ENCODE measurements at regions of chr5 and their contacts with region 1.

Region 1: GRCh38 chr5:16791036-16791705 is 144.9 kb downstream of the MYO10 start:
- DNase-seq: peak; percentile 95
- ATAC-seq: peak; percentile 40
- H3K4me3 ChIP-seq: no peak overlapping the region
- H3K27ac ChIP-seq: no peak overlapping the region
- H3K4me1 ChIP-seq: no peaks in the 10 kb centered on the region
- H3K27me3 ChIP-seq: no peaks in the 10 kb centered on the region
- CTCF ChIP-seq: peak; percentile 97

Region 2: DNA sequence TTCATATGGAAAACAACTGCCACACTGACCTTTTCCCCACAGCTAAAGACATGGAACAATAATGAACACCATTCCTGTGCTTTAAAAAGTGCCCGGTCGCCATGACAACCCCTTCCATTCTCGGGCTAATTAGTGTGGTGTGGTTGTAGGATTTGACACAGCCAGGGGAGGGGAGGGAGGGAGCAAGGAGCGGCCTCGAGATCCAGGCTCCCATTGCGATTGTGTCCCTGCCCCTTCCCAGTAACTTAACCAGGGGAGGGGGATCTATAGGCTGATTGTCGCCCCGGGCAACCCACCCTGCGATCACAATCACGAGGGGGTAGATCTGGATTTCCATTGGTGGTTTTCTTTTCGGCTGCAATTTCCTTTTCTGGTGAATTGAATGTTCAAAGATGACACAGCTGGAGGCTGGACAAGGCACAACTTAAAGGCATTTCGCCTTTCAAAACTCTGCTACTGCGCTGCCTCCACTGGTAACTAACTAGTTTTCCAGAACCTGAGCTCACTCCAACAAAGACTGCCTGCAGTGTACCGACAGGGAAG is 77.7 kb before region 1 on chr5:
- CTCF ChIA-PET with region 1: no interaction called
- POLR2A ChIA-PET with region 1: no interaction called
- intact Hi-C with region 1: no loop called
- DNase-seq: no peak
- ATAC-seq: no peak
- H3K4me3 ChIP-seq: no peak overlapping the region
- H3K27ac ChIP-seq: no peak overlapping the region
- H3K4me1 ChIP-seq: no peaks in the 10 kb centered on the region
- H3K27me3 ChIP-seq: no peaks in the 10 kb centered on the region
- CTCF ChIP-seq: no peak

Region 3: GRCh38 chr5:16885635-16886365 is 94.6 kb after region 1 on chr5:
- CTCF ChIA-PET with region 1: no interaction called
- POLR2A ChIA-PET with region 1: interaction called, 10 read pairs
- intact Hi-C with region 1: no loop called
- DNase-seq: no peak
- ATAC-seq: no peak
- H3K4me3 ChIP-seq: no peak overlapping the region
- H3K27ac ChIP-seq: no peak overlapping the region
- H3K4me1 ChIP-seq: peaks cover 57% of the 10 kb centered on the region
- H3K27me3 ChIP-seq: no peaks in the 10 kb centered on the region
- CTCF ChIP-seq: no peak

Region 4: DNA sequence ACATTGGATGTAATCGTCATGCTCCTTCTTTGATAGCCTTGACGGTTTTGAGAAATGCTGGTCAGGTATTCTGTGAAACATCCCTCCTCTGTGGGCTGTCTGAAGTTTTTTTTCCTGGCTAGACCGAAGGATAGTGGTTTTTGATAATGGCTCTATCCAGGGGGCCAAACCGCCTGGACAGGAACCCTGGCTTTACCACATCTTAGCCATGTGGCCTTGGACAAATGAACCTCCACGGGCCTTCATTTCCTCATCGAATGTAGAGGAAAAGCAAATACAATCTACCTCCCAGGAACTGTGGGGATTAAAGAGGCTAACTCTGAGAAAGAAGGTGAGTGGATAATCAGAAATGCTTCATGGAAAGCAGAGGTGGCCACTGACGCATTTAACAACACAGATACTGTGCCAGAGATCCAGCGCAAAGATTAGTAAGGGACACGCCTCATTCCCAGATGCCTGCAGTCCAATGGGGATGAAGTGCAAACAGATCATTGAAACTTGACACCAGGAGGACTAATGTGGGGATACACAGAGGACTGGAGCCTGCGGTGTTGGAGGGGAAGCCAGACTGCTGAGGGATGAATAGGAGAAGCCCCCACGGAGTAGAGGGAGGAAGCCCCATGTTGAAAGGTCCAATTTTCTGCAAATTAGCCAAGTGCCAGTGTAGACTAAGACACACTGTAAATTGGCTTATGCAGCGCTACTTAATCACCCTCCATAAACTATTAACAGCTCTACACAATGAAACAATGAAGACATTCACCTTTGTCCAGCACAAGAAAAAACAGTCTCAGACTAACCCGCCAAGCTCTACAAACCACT is 103.3 kb after region 1 on chr5:
- CTCF ChIA-PET with region 1: no interaction called
- POLR2A ChIA-PET with region 1: no interaction called
- intact Hi-C with region 1: loop called (anchors 1 kb)
- DNase-seq: peak; percentile 100
- ATAC-seq: peak; percentile 77
- H3K4me3 ChIP-seq: peak overlapping the region; percentile 39
- H3K27ac ChIP-seq: peak overlapping the region; percentile 91
- H3K4me1 ChIP-seq: peaks cover 67% of the 10 kb centered on the region
- H3K27me3 ChIP-seq: no peaks in the 10 kb centered on the region
- CTCF ChIP-seq: no peak

Region 5: DNA sequence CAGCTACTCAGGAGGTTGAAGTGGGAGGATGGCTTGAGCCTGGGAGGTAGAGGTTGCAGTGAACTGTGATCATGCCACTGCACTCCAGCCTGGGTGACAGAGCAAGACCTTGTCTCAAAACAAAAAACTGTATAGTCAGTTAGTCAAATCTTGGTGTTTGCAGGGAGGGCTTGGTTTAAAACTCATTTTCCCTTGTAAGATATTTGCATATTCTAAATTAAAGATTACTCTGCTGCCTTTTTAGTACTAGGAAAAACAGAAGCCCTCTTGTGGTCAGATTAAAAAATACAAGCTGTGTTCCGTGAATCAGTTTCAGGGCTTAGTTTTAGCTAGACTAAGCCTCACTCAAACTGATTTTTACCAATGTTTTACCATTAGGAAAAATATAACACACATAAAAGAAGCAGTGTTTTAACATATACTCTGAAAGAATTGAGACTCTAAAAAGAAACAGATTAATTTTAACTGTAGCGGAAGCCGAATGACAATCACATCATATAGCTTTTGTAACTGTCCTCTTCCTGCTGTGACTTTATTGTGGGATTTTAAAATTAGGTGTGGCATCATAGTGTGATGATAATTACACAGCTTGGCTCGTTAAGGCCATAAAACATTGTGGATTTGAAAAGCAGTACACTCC is 341.4 kb after region 1 on chr5:
- CTCF ChIA-PET with region 1: interaction called, 8 read pairs
- POLR2A ChIA-PET with region 1: no interaction called
- intact Hi-C with region 1: loop called (anchors 2 kb)
- DNase-seq: peak; percentile 88
- ATAC-seq: no peak
- H3K4me3 ChIP-seq: no peak overlapping the region
- H3K27ac ChIP-seq: no peak overlapping the region
- H3K4me1 ChIP-seq: peaks cover 27% of the 10 kb centered on the region
- H3K27me3 ChIP-seq: no peaks in the 10 kb centered on the region
- CTCF ChIP-seq: peak; percentile 94

Region 6: GRCh38 chr5:17189381-17190036 is 398.3 kb after region 1 on chr5:
- CTCF ChIA-PET with region 1: interaction called, 14 read pairs
- POLR2A ChIA-PET with region 1: no interaction called
- intact Hi-C with region 1: loop called (anchors 1 kb)
- DNase-seq: peak; percentile 99
- ATAC-seq: peak; percentile 45
- H3K4me3 ChIP-seq: no peak overlapping the region
- H3K27ac ChIP-seq: peak overlapping the region; percentile 1; the same call in 1 of the 2 replicates
- H3K4me1 ChIP-seq: peaks cover 53% of the 10 kb centered on the region
- H3K27me3 ChIP-seq: no peaks in the 10 kb centered on the region
- CTCF ChIP-seq: peak; percentile 100

Region 7: DNA sequence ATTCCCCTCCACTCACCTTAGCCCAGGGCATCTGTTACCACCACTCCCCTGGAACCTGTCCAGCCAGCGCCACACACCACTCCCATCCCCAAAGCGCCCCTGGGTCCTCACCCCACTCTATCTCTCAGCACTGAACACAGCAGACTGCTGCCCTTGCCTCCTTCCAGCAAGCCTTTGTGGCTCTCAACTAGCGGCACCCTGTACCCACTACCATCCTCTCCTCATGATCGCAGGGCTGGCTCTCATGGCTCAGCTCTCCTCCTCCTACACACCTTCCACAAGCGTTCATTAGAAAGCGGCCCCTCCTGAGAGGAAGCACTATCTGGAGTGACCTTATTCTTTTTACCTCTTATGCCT is 412.9 kb after region 1 on chr5:
- CTCF ChIA-PET with region 1: no interaction called
- POLR2A ChIA-PET with region 1: no interaction called
- intact Hi-C with region 1: loop called (anchors 1 kb)
- DNase-seq: no peak
- ATAC-seq: no peak
- H3K4me3 ChIP-seq: no peak overlapping the region
- H3K27ac ChIP-seq: no peak overlapping the region
- H3K4me1 ChIP-seq: no peaks in the 10 kb centered on the region
- H3K27me3 ChIP-seq: no peaks in the 10 kb centered on the region
- CTCF ChIP-seq: no peak

Measured in PC-3 (cell line).